Cardiac septum (tissue), 1 donor: ENCODE measurements at regions of chrX and their contacts with region 1.

Region 1: GRCh38 chrX:120372667-120373370 is 10.9 kb downstream of the ATP1B4 start:
- DNase-seq: no peak

Region 2: GRCh38 chrX:120457766-120458180 is 85.0 kb after region 1 on chrX:
- intact Hi-C with region 1: loop called (anchors 10 kb)
- DNase-seq: no peak